IMR-90 (cell line): ENCODE measurements at regions of chr3 and their contacts with region 1.

Region 1: GRCh38 chr3:66931291-66931690 is 66.8 kb upstream of the KBTBD8 start:
- DNase-seq: no peak
- ATAC-seq: no peak
- H3K4me3 ChIP-seq: no peak overlapping the region
- H3K27ac ChIP-seq: no peak overlapping the region
- H3K4me1 ChIP-seq: no peaks in the 10 kb centered on the region
- H3K27me3 ChIP-seq: peaks cover 7% of the 10 kb centered on the region
- CTCF ChIP-seq: no peak
- POLR2A ChIP-seq: no peak
- RAD21 ChIP-seq: no peak

Region 2: DNA sequence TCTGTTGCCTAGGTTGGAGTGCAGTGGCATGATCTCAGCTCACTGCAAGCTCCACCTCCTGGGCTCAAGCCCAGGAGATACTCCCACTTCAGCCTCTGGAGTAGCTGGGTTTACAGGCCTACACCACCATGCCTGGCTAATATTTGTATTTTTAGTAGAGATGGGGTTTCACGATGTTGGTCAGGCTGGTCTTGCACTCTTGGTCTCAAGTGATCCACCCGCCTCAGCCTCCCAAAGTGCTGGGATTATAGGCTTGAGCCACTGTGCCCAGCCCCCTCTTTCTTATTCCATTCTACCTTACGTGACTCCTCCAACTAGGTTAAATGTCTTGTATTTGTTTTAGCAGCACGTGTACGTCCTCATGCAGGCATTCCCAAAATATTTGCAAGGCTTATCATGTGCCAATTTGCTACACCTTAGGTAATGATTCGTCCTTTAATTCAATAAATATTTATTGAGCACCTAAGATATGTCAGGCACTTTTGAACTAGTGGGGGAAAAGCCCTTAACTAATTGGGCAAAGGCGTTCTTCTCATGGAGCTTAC is 877.7 kb before region 1 on chr3:
- CTCF ChIA-PET with region 1: no interaction called
- POLR2A ChIA-PET with region 1: no interaction called
- dilution Hi-C with region 1: no loop called
- in situ Hi-C with region 1: no loop called
- intact Hi-C with region 1: no loop called
- DNase-seq: no peak
- ATAC-seq: peak; percentile 64; the same call in 1 of the 2 replicates
- H3K4me3 ChIP-seq: no peak overlapping the region
- H3K27ac ChIP-seq: no peak overlapping the region
- H3K4me1 ChIP-seq: peaks cover 3% of the 10 kb centered on the region
- H3K27me3 ChIP-seq: no peaks in the 10 kb centered on the region
- CTCF ChIP-seq: no peak
- POLR2A ChIP-seq: no peak
- RAD21 ChIP-seq: no peak

Region 3: DNA sequence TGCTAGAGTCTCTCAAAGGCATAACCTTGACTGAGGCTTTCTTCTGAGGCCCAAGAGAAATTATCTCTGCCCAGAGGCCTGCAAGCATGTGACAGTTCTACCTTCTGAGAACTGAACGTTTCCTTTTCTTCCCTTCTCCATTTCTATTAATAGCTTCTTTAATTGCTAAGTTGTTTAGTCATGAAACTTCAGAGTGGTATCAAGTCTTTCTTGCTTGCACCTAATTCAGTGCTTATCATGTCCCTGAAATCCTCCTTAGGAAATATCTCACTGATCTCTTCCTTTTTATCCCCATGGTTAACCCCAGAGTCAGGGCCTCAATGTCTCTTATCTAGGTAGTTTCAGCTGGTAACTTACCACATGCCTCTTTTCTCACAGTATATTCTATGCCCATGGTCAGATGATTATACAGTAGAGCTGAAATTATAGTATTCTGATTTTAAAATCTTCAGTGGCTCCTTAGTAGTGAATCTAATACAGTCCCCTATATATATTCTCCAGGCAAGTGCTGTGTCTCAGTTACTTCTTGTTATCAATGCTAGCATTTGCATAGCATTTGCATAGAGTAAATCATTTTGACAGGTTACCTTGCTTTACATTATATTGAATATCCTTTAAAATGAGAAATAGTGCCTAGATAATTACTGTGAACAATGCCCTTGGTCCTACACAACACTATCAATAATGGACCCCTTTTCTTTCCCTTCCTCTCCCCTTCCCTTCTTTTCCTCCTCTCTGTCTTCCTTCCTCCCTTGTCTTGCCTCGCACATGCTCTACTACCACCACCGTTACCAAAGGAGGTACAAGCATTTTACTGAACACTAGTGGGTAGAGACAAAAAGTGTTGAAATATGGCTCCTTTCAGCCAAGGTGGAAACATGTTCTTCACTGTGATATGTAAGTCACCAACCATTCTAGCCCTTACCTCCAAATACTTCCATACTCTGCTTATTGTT is 99.8 kb after region 1 on chr3:
- CTCF ChIA-PET with region 1: no interaction called
- POLR2A ChIA-PET with region 1: no interaction called
- dilution Hi-C with region 1: no loop called
- in situ Hi-C with region 1: no loop called
- intact Hi-C with region 1: loop called (anchors 2 kb)
- DNase-seq: no peak
- ATAC-seq: no peak
- H3K4me3 ChIP-seq: no peak overlapping the region
- H3K27ac ChIP-seq: no peak overlapping the region
- H3K4me1 ChIP-seq: no peaks in the 10 kb centered on the region
- H3K27me3 ChIP-seq: no peaks in the 10 kb centered on the region; the same call in 1 of the 2 replicates
- CTCF ChIP-seq: no peak
- POLR2A ChIP-seq: no peak
- RAD21 ChIP-seq: no peak